B cell (primary cell): ENCODE measurements at regions of chr7 and their contacts with region 1.

Region 1: DNA sequence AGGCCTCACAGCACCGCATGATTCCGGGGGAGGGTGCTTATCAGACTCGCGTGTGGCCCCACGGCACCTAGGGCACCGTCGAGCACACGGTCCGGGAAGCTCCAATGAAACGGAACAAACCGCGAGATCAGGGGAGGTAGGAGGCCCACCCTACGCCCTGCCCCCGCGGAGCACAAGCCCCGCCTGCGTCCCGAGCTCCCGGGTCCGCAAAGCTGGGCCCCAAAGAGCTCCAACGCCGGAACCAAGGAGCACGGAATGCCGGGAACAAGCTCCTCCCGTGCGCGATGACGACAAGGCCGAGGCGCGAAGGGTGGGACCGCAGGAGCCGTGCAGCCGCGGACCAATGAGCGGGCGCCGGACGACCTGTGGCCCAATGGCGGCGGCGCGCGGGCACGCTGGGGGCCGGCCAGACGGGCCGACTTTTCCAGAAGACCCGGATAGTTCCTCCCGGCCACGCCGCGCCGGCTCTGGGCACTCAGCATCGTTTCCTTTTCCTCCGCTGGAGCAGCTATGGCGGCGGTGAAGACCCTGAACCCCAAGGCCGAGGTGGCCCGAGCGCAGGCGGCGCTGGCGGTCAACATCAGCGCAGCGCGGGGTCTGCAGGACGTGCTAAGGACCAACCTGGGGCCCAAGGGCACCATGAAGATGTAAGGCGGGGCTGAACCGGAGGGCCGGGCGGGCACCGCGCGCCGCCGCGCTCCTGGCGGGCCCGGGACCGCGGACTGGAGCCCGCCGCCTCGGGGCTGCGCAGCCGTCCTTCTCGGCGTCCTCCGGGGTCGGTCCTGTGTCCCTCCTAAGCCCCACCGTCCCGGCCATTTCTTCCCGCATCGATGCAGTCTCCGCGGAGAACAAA is at the starts of genes CCT6A and PSPH:
- DNase-seq: peak; percentile 91
- ATAC-seq: peak; percentile 93
- H3K4me3 ChIP-seq: peak within 1 kb of the TSS; percentile 65 to 90 (median 75)
- H3K4me3 Mint-ChIP-seq: peak within 1 kb of the TSS; percentile 96
- H3K27ac ChIP-seq: peak within 1 kb of the TSS; percentile 72 to 78
- H3K27ac Mint-ChIP-seq: peak within 1 kb of the TSS; percentile 94
- H3K4me1 ChIP-seq: peaks cover 17 to 25% of the 10 kb centered on the region in 2 donors
- H3K4me1 Mint-ChIP-seq: peaks cover 30% of the 10 kb centered on the region
- H3K27me3 ChIP-seq: no peaks in the 10 kb centered on the region
- H3K27me3 Mint-ChIP-seq: no peaks in the 10 kb centered on the region
- CTCF ChIP-seq: no peak
- total RNA-seq, gene CCT6A: 71.3 and 79.0 TPM in 2 replicates
- total RNA-seq, gene PSPH: 4.1 and 6.2 TPM in 2 replicates

Region 2: DNA sequence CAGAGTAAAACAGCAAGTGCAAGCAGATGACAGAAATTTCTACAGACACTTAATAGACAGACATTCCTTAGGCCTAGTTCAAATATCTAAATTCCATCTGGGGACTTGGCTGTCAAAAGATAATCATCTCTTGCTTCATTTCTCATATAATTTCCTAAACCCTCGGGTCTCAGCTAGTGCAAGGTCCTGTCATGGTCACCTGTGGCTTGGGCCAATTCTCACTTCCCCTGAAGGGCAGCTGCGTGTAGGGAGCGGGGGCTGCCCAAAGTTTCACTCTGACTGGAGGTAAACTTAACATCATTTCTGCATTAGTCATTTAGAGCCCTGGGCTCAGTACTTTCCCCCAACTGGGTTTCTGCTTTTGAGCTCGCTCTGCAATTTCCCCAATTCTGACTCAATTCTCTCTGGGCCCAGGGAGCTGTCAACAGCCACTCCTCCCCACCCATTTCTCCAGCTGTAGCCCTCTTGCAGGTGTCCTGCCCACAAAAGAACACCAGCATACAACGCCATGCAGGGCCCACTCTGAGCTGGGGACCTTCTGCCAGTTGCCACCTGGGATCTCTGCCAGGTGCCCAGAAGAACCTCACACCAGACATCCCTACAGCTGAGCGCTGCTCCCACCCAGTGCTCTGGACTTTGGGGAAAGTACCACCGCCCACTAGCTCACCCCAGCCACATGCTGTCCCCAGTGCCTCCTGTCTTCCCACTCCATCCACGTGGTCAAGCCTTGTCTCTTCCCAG is 517.2 kb before region 1 on chr7:
- CTCF ChIA-PET with region 1: no interaction called
- POLR2A ChIA-PET with region 1: interaction called, 3 read pairs
- intact Hi-C with region 1: loop called (anchors 1 kb)
- DNase-seq: peak; percentile 94
- ATAC-seq: peak; percentile 67
- H3K4me3 ChIP-seq: peak overlapping the region; percentile 2 to 59 (median 34)
- H3K4me3 Mint-ChIP-seq: peak overlapping the region; percentile 83
- H3K27ac ChIP-seq: peak overlapping the region; percentile 100
- H3K27ac Mint-ChIP-seq: peak overlapping the region; percentile 99
- H3K4me1 ChIP-seq: peaks cover 75 to 94% of the 10 kb centered on the region in 2 donors
- H3K4me1 Mint-ChIP-seq: peaks cover 94% of the 10 kb centered on the region
- H3K27me3 ChIP-seq: no peaks in the 10 kb centered on the region
- H3K27me3 Mint-ChIP-seq: no peaks in the 10 kb centered on the region
- CTCF ChIP-seq: no peak

Region 3: DNA sequence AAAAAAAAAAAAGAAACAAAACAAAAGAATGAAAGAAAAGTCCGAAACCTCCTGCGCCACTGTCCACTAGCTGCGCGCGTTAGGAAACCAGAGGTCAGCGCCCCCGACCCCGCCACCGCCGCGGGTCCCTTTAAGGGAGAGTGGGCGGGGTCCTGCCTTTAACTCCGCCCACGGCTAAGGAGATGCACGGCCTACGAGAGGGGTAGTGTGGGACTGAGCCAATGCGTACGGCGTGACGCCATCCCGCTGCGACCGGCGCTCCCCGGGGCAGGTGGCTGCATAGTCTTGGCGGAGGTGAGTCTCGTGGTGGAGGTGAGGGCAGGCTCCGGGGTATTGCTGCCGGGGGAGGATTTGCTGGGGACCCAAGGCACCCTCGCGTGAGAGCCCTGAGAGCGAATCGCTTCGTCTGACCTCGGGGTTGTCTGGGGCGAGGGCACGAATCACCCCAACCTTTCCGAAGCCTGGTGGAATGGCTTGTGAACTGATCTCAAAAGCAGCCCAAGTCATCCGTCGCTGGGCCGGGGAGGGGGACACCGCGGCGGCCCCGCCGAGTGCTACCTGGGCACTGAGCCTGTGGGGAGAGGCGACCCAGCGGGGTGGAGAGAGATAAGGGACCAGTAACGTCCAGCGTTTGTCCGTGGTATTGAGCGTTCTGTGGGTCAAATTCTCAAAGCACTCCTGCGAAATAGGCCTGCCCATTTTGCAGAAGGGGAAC is 99.8 kb before region 1 on chr7 and contains the start of gene MRPS17:
- CTCF ChIA-PET with region 1: no interaction called
- POLR2A ChIA-PET with region 1: no interaction called
- intact Hi-C with region 1: loop called (anchors 1 kb)
- DNase-seq: peak; percentile 94
- ATAC-seq: peak; percentile 100
- H3K4me3 ChIP-seq: peak within 1 kb of the TSS; percentile 72 to 87 (median 83)
- H3K4me3 Mint-ChIP-seq: peak within 1 kb of the TSS; percentile 96
- H3K27ac ChIP-seq: peak within 1 kb of the TSS; percentile 79 to 90
- H3K27ac Mint-ChIP-seq: peak within 1 kb of the TSS; percentile 93
- H3K4me1 ChIP-seq: peaks cover 5 to 19% of the 10 kb centered on the region in 2 donors
- H3K4me1 Mint-ChIP-seq: peaks cover 13% of the 10 kb centered on the region
- H3K27me3 ChIP-seq: no peaks in the 10 kb centered on the region
- H3K27me3 Mint-ChIP-seq: no peaks in the 10 kb centered on the region
- CTCF ChIP-seq: no peak
- total RNA-seq, gene MRPS17: 10.3 and 13.0 TPM in 2 replicates

Region 4: DNA sequence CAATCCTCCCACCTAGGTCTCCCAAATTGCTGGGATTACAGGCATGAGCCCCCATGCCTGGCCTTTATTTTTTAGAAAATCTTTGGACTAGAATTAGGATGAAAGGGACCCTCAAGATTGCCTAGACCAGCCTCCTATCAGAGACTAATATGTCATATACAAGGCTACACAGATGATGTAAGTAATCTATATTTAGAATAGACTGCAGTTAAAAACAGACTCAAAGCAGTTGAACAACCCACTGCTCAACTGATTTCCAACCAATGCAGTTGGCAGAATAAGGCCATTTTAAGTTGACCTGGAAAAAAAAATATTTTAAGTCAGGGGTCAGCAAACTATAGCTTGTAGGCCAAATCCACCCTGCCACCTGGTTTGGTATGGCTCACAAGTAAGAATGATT is 28.1 kb before region 1 on chr7:
- CTCF ChIA-PET with region 1: no interaction called
- POLR2A ChIA-PET with region 1: no interaction called
- intact Hi-C with region 1: no loop called
- DNase-seq: no peak
- ATAC-seq: no peak
- H3K4me3 ChIP-seq: no peak overlapping the region
- H3K4me3 Mint-ChIP-seq: no peak overlapping the region
- H3K27ac ChIP-seq: no peak overlapping the region
- H3K27ac Mint-ChIP-seq: no peak overlapping the region
- H3K4me1 ChIP-seq: no peaks in the 10 kb centered on the region
- H3K4me1 Mint-ChIP-seq: no peaks in the 10 kb centered on the region
- H3K27me3 ChIP-seq: no peaks in the 10 kb centered on the region
- H3K27me3 Mint-ChIP-seq: no peaks in the 10 kb centered on the region
- CTCF ChIP-seq: no peak

Region 5: DNA sequence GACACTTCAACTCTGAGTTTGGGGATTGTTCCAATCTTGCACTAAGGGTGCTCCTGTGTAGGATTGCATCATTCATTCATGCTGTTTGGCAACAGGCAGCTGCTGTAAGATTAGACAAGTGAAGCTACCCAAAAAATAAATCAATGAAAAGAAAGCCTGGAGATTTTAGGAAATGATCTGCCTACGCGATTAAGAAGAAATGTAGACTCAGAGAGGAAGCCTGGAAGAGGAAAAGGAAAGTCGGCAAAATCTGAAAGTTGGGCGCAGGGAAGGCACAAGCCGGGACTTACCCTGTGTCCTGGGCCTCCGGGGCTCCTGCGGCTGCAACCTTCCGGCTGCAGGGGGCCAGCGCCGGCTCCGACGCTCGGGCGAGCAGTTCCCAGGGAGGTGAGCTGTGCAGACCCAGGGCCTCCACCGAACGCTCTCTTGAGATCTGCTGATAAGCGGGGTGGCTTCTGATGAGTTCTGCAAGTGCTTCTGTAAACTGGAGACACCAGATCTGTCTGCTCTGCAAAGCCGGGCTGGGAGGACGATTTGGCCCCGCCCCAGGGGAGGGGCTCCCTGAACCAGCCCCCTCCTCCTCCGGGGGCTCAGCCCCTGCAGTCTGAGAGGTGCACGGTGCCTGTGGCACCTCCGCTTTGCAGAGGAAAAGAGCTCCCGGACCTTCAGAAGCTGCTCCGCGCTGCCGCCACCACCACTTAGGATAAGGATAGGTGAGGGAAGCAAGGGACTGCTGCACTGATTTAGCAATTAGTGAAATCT is 17.7 kb before region 1 on chr7:
- CTCF ChIA-PET with region 1: no interaction called
- POLR2A ChIA-PET with region 1: no interaction called
- intact Hi-C with region 1: loop called (anchors 1 kb)
- DNase-seq: peak; percentile 74
- ATAC-seq: peak; percentile 99
- H3K4me3 ChIP-seq: peak overlapping the region; percentile 50 to 77 (median 70)
- H3K4me3 Mint-ChIP-seq: peak overlapping the region; percentile 84
- H3K27ac ChIP-seq: peak overlapping the region in 1 of 2 donors; percentile 23
- H3K27ac Mint-ChIP-seq: peak overlapping the region; percentile 8
- H3K4me1 ChIP-seq: peaks cover 3 to 8% of the 10 kb centered on the region in 2 donors
- H3K4me1 Mint-ChIP-seq: peaks cover 6% of the 10 kb centered on the region
- H3K27me3 ChIP-seq: no peaks in the 10 kb centered on the region
- H3K27me3 Mint-ChIP-seq: no peaks in the 10 kb centered on the region
- CTCF ChIP-seq: peak; percentile 29

Region 6: GRCh38 chr7:56074371-56074791 is 22.8 kb after region 1 on chr7:
- CTCF ChIA-PET with region 1: interaction called, 17 read pairs
- POLR2A ChIA-PET with region 1: no interaction called
- intact Hi-C with region 1: no loop called
- DNase-seq: peak; percentile 80
- ATAC-seq: peak; percentile 95
- H3K4me3 ChIP-seq: no peak overlapping the region
- H3K4me3 Mint-ChIP-seq: no peak overlapping the region
- H3K27ac ChIP-seq: no peak overlapping the region
- H3K27ac Mint-ChIP-seq: peak overlapping the region; percentile 12
- H3K4me1 ChIP-seq: no peaks in the 10 kb centered on the region
- H3K4me1 Mint-ChIP-seq: peaks cover 5% of the 10 kb centered on the region
- H3K27me3 ChIP-seq: no peaks in the 10 kb centered on the region
- H3K27me3 Mint-ChIP-seq: no peaks in the 10 kb centered on the region
- CTCF ChIP-seq: peak; percentile 99

Region 7: DNA sequence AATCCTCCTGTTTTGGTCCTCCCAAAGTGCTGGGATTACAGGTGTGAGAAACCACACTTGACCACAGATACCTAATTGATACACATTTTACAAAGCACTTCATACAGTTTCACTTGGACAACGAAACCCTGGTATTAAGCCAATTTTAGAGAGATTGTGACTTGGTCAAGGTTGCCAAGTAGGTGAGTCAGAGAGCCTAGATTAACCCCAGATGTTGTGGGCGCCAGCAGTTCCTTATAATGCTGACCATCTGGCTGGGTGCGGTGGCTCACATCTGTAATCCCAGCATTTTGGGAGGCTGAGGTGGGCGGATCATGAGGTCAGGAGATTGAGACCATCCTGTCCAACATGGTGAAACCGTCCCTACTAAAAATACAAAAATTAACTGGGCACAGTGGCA is 46.1 kb after region 1 on chr7:
- CTCF ChIA-PET with region 1: no interaction called
- POLR2A ChIA-PET with region 1: no interaction called
- intact Hi-C with region 1: no loop called
- DNase-seq: no peak
- ATAC-seq: no peak
- H3K4me3 ChIP-seq: no peak overlapping the region
- H3K4me3 Mint-ChIP-seq: no peak overlapping the region
- H3K27ac ChIP-seq: no peak overlapping the region
- H3K27ac Mint-ChIP-seq: no peak overlapping the region
- H3K4me1 ChIP-seq: no peaks in the 10 kb centered on the region
- H3K4me1 Mint-ChIP-seq: no peaks in the 10 kb centered on the region
- H3K27me3 ChIP-seq: no peaks in the 10 kb centered on the region
- H3K27me3 Mint-ChIP-seq: no peaks in the 10 kb centered on the region
- CTCF ChIP-seq: no peak

Region 8: GRCh38 chr7:56188823-56189346 is 137.3 kb after region 1 on chr7:
- CTCF ChIA-PET with region 1: no interaction called
- POLR2A ChIA-PET with region 1: no interaction called
- intact Hi-C with region 1: no loop called
- DNase-seq: no peak
- ATAC-seq: no peak
- H3K4me3 ChIP-seq: no peak overlapping the region
- H3K4me3 Mint-ChIP-seq: no peak overlapping the region
- H3K27ac ChIP-seq: no peak overlapping the region
- H3K27ac Mint-ChIP-seq: no peak overlapping the region
- H3K4me1 ChIP-seq: no peaks in the 10 kb centered on the region
- H3K4me1 Mint-ChIP-seq: no peaks in the 10 kb centered on the region
- H3K27me3 ChIP-seq: no peaks in the 10 kb centered on the region
- H3K27me3 Mint-ChIP-seq: no peaks in the 10 kb centered on the region
- CTCF ChIP-seq: no peak